Mammary epithelial cell (primary cell): ENCODE measurements at regions of chr1 and their contacts with region 1.

Region 1: GRCh38 chr1:208557046-208557722 is 313.0 kb upstream of the PLXNA2 start:
- DNase-seq: no peak
- H3K4me3 ChIP-seq: no peak overlapping the region
- H3K27ac ChIP-seq: no peak overlapping the region
- H3K4me1 ChIP-seq: no peaks in the 10 kb centered on the region
- H3K27me3 ChIP-seq: no peaks in the 10 kb centered on the region
- CTCF ChIP-seq: no peak

Region 2: GRCh38 chr1:208500375-208500774 is 56.8 kb before region 1 on chr1:
- CTCF ChIA-PET with region 1: no interaction called
- dilution Hi-C with region 1: loop called (anchors 5 kb)
- in situ Hi-C with region 1: no loop called
- intact Hi-C with region 1: no loop called
- DNase-seq: no peak
- H3K4me3 ChIP-seq: no peak overlapping the region
- H3K27ac ChIP-seq: no peak overlapping the region
- H3K4me1 ChIP-seq: peaks cover 22% of the 10 kb centered on the region
- H3K27me3 ChIP-seq: no peaks in the 10 kb centered on the region
- CTCF ChIP-seq: no peak

Region 3: DNA sequence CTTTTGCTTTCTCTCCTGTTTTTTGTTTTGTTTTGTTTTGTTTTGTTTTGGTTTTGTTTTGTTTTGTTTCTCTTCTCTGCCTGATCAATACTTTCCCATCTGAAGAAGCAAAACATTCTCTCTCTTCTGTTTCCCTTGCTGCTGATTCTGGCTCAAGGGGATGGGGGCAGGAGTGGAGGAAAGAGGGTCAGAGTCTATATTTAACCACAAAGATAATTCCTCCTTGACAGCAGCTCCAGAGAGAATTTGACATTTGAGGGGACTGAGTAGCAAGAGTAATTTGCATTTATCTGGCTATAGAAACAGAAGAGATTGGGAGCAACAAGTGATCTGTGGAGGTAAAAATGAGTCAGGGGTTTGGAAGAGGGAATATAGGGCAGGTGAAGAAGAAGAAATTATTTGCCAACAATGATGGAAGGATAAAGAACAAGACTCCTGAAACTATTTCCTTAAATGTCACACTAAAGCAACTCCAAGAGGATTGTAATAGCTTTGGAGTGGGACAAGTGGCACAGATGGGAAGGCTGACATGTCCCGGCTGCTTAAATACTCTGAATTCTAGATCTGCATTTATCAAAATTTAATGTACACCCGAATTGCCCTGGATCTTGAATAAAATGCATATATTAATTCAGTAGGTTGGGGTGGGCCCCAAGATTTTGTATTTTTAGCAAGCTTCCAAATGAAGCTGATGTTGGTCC is 36.3 kb after region 1 on chr1:
- CTCF ChIA-PET with region 1: no interaction called
- dilution Hi-C with region 1: loop called (anchors 5 kb)
- in situ Hi-C with region 1: no loop called
- intact Hi-C with region 1: no loop called
- DNase-seq: no peak
- H3K4me3 ChIP-seq: no peak overlapping the region
- H3K27ac ChIP-seq: no peak overlapping the region
- H3K4me1 ChIP-seq: no peaks in the 10 kb centered on the region
- H3K27me3 ChIP-seq: peaks cover 4% of the 10 kb centered on the region
- CTCF ChIP-seq: no peak

Region 4: DNA sequence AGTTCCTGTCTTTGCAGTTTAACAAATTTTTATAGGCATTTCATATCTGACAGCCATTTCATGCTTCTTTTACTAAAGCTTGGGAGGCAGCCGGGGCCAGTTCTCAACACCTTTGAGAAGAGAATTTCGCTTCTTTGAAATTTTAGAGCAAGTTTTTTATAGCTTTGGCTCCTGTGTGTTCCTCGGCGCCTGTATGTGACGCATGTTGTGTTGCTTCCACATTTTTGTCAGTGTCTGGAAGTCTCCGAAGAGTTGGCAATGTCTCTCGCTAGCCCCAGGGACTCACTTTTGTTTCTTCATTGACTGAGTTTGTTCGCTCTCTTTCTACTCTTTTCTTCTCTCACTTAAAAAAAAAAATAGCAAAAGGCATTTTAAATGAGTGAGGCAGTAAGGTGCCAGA is 73.9 kb after region 1 on chr1:
- CTCF ChIA-PET with region 1: no interaction called
- dilution Hi-C with region 1: loop called (anchors 5 kb)
- in situ Hi-C with region 1: no loop called
- intact Hi-C with region 1: no loop called
- DNase-seq: no peak
- H3K4me3 ChIP-seq: no peak overlapping the region
- H3K27ac ChIP-seq: no peak overlapping the region
- H3K4me1 ChIP-seq: no peaks in the 10 kb centered on the region
- H3K27me3 ChIP-seq: peaks cover 7% of the 10 kb centered on the region
- CTCF ChIP-seq: no peak

Region 5: GRCh38 chr1:208652296-208653160 is 95.3 kb after region 1 on chr1:
- CTCF ChIA-PET with region 1: no interaction called
- dilution Hi-C with region 1: no loop called
- in situ Hi-C with region 1: no loop called
- intact Hi-C with region 1: no loop called
- DNase-seq: peak; percentile 54
- H3K4me3 ChIP-seq: no peak overlapping the region
- H3K27ac ChIP-seq: no peak overlapping the region
- H3K4me1 ChIP-seq: no peaks in the 10 kb centered on the region
- H3K27me3 ChIP-seq: peaks cover 6% of the 10 kb centered on the region
- CTCF ChIP-seq: peak; percentile 83 to 87